GM12878 (cell line): ENCODE measurements at regions of chr14 and their contacts with region 1.

Region 1: DNA sequence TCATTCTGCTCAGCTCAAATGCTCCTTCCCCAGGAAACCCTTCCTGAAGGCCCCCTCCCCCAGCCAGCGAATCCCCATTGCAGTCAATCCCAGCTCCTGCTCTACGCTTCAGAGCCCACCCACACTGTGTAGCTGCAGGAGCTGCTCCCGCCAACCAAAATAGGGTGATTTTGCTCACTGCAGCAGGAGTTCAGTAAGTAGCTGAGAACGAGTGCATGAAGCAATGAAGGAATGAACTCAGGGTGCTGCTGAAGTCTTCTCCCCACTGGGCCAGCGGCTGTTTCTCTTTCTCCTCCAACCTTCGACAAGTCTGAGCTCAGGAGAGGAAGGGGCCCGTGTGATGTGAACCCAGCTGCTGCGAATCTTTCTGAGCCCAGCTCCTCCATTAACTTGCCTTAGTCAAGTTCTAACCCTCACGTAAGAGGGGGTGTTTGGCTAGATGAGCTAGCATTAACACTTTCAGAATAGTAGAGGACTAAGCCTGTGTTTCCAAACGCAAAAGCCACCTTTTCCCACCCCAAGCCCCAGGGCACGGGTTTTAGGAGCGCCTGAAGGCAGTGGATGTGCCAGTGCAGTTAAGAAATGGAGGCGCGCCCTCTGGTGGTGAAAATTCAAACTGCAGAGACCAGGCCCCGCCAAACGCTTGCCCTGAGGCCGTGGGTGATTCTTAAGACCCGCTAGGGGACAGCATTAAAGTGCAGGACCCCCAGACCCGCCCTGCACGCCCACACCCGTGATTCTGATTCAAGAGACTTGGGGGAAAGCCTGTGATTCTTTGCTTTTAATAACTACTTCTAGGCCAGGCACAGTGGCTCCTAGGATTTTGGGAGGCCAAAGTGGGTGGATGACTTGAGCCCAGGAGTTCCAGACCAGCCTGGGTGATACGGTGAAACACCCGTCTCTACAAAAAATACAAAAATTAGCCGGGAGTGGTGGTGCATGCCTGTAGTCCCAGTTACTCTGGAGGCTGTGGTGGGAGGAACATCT is 11.9 kb upstream of the SERPINA4 start:
- DNase-seq: no peak
- ATAC-seq: peak; percentile 93
- H3K4me3 ChIP-seq: no peak overlapping the region
- H3K27ac ChIP-seq: no peak overlapping the region
- H3K4me1 ChIP-seq: no peaks in the 10 kb centered on the region
- H3K27me3 ChIP-seq: peaks cover 0 to 8% of the 10 kb centered on the region in 2 experiments; a peak in 1 of 4 replicates
- CTCF ChIP-seq: peak; percentile 78 to 86 (median 86)
- EP300 ChIP-seq: no peak
- POLR2A ChIP-seq: no peak
- RAD21 ChIP-seq: peak; percentile 61

Region 2: GRCh38 chr14:94193776-94194175 is 355.5 kb before region 1 on chr14:
- CTCF ChIA-PET with region 1: no interaction called
- POLR2A ChIA-PET with region 1: no interaction called
- RAD21 ChIA-PET with region 1: no interaction called
- SMC1A ChIA-PET with region 1: no interaction called
- in situ Hi-C with region 1: no loop called
- intact Hi-C with region 1: no loop called
- DNase-seq: no peak
- ATAC-seq: no peak
- H3K4me3 ChIP-seq: no peak overlapping the region
- H3K27ac ChIP-seq: no peak overlapping the region
- H3K4me1 ChIP-seq: no peaks in the 10 kb centered on the region
- H3K27me3 ChIP-seq: no peaks in the 10 kb centered on the region
- CTCF ChIP-seq: no peak
- EP300 ChIP-seq: no peak
- POLR2A ChIP-seq: no peak
- RAD21 ChIP-seq: no peak

Region 3: GRCh38 chr14:94423453-94424056 is 125.7 kb before region 1 on chr14:
- CTCF ChIA-PET with region 1: interaction called, 18 read pairs
- POLR2A ChIA-PET with region 1: no interaction called
- RAD21 ChIA-PET with region 1: interaction called, 3 read pairs
- SMC1A ChIA-PET with region 1: interaction called, 3 read pairs
- in situ Hi-C with region 1: no loop called
- intact Hi-C with region 1: loop called (anchors 1 kb)
- DNase-seq: peak; percentile 24
- ATAC-seq: peak; percentile 88
- H3K4me3 ChIP-seq: no peak overlapping the region
- H3K27ac ChIP-seq: no peak overlapping the region
- H3K4me1 ChIP-seq: no peaks in the 10 kb centered on the region
- H3K27me3 ChIP-seq: peaks cover 0 to 1% of the 10 kb centered on the region in 2 experiments; a peak in 3 of 4 replicates
- CTCF ChIP-seq: peak; percentile 69 to 85 (median 72)
- EP300 ChIP-seq: no peak
- POLR2A ChIP-seq: no peak
- RAD21 ChIP-seq: peak; percentile 49

Region 4: GRCh38 chr14:94428610-94429009 is 120.7 kb before region 1 on chr14:
- CTCF ChIA-PET with region 1: interaction called, 19 read pairs
- POLR2A ChIA-PET with region 1: no interaction called
- RAD21 ChIA-PET with region 1: interaction called, 11 read pairs
- SMC1A ChIA-PET with region 1: interaction called, 10 read pairs
- in situ Hi-C with region 1: loop called (anchors 5 kb)
- intact Hi-C with region 1: loop called (anchors 1 kb)
- DNase-seq: no peak
- ATAC-seq: no peak
- H3K4me3 ChIP-seq: no peak overlapping the region
- H3K27ac ChIP-seq: no peak overlapping the region
- H3K4me1 ChIP-seq: no peaks in the 10 kb centered on the region
- H3K27me3 ChIP-seq: peaks cover 0 to 1% of the 10 kb centered on the region in 2 experiments; a peak in 3 of 4 replicates
- CTCF ChIP-seq: no peak
- EP300 ChIP-seq: no peak
- POLR2A ChIP-seq: no peak
- RAD21 ChIP-seq: no peak

Region 5: DNA sequence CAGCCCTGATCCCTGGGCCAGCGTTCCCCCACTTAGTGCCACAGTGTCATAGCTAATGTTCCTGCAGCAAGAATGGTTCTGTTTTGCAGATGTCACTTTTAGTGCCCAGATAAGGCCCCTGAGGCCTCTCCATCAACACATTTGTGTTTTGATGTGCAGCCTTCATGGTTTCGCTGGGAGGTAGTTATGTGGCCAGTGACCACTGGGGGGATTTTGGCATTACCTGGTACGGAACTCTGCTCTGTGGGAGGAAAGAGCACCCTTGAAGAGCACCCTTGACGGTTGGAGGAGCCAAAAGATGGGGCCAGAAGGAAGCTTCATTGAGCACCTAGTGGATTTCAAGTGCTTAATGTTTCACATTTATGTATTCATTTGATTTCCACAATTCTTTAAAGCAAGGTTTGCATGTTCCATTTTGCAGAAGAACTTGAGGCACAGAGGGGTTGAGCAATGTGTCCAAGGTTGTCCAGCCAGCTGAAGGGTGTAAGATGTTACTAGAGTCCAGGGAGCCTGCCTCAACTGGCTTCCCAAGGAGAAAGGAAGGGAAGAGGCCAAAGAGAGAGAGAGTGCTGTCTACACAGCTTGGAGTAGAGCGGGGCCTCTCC is 109.7 kb before region 1 on chr14:
- CTCF ChIA-PET with region 1: interaction called, 6 read pairs
- POLR2A ChIA-PET with region 1: no interaction called
- RAD21 ChIA-PET with region 1: no interaction called
- SMC1A ChIA-PET with region 1: interaction called, 4 read pairs
- in situ Hi-C with region 1: loop called (anchors 5 kb)
- intact Hi-C with region 1: loop called (anchors 1 kb)
- DNase-seq: no peak
- ATAC-seq: peak; percentile 44; the same call in 2 of the 3 replicates
- H3K4me3 ChIP-seq: no peak overlapping the region
- H3K27ac ChIP-seq: no peak overlapping the region
- H3K4me1 ChIP-seq: no peaks in the 10 kb centered on the region
- H3K27me3 ChIP-seq: no peaks in the 10 kb centered on the region
- CTCF ChIP-seq: peak in 2 of 3 experiments; percentile 12 to 16; a peak in 1 of 6 replicates
- EP300 ChIP-seq: no peak
- POLR2A ChIP-seq: no peak
- RAD21 ChIP-seq: no peak

Region 6: DNA sequence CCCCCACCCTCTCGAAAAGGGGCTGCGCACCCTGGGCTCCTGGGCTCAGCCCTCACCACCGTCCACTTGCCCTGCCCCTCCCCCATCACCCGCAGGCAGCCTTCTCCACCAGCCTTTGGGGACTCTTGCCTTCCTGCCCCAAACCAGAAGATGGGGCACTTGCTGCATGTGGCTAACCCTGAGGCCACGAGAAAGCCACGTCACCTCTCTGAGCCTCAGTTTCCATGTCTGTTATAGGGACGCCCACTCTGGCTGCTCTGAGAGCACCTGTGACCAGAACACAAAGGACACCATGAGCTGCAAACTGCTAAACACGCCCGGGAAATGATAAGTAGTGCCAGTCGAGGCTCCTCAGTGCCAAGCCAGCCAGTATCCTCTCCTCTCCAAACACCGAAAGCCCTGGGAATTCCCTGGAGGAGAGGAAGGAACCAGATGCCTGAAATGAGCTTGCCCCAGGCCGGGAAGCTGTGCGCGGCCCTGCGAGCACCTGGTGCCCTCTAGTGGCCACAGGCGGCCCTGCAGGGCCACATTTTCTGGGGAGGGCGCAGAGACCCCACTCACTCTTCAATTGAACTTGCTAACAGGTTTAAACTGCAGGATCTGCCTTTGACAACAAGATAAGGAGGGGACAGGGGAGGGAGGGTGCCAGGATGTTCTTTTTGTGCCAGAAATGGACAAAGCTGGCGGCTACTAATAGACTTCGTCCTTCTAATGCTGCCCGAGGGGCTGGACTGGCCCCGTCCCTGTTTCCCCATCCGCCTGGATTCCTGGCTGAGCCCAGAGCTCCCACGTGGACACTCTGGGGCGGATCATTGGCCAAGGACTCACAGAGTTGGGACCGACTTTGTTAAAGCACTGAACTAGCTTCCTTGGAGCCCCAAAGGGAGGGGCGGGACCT is 63.1 kb before region 1 on chr14:
- CTCF ChIA-PET with region 1: interaction called, 5 read pairs
- POLR2A ChIA-PET with region 1: no interaction called
- RAD21 ChIA-PET with region 1: interaction called, 12 read pairs
- SMC1A ChIA-PET with region 1: no interaction called
- in situ Hi-C with region 1: no loop called
- intact Hi-C with region 1: loop called (anchors 1 kb)
- DNase-seq: no peak
- ATAC-seq: peak; percentile 64
- H3K4me3 ChIP-seq: no peak overlapping the region
- H3K27ac ChIP-seq: no peak overlapping the region
- H3K4me1 ChIP-seq: peaks cover 10% of the 10 kb centered on the region
- H3K27me3 ChIP-seq: peaks cover 0 to 2% of the 10 kb centered on the region in 2 experiments; a peak in 1 of 4 replicates
- CTCF ChIP-seq: peak; percentile 98 to 99 (median 99); a peak in 5 of 6 replicates
- EP300 ChIP-seq: no peak
- POLR2A ChIP-seq: no peak
- RAD21 ChIP-seq: peak; percentile 80

Region 7: DNA sequence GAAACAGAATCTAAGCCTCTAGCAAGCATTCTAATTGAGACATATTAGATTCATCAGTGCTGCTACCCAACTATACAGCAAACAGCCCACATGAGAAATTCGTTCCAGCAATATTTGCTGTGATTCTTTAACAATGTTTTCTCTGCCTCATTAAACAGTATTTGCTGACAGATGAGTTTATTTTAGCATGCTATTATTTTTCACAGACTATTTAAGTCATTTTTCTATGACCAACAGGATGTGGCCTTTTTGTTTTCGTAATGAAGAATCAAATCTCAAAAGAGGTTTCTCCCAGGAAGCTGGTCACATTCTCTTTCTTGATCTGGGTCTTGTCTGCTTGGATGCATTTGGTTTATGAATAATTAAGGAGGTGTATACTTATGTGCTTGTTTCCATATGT is 16.8 kb before region 1 on chr14:
- CTCF ChIA-PET with region 1: interaction called, 10 read pairs
- POLR2A ChIA-PET with region 1: no interaction called
- RAD21 ChIA-PET with region 1: no interaction called
- SMC1A ChIA-PET with region 1: no interaction called
- in situ Hi-C with region 1: no loop called
- intact Hi-C with region 1: no loop called
- DNase-seq: peak; percentile 37
- ATAC-seq: no peak; the same call in 2 of the 3 replicates
- H3K4me3 ChIP-seq: no peak overlapping the region
- H3K27ac ChIP-seq: no peak overlapping the region
- H3K4me1 ChIP-seq: peaks cover 4% of the 10 kb centered on the region; the same call in 1 of the 2 replicates
- H3K27me3 ChIP-seq: no peaks in the 10 kb centered on the region
- CTCF ChIP-seq: no peak
- EP300 ChIP-seq: no peak
- POLR2A ChIP-seq: no peak
- RAD21 ChIP-seq: no peak

Region 8: DNA sequence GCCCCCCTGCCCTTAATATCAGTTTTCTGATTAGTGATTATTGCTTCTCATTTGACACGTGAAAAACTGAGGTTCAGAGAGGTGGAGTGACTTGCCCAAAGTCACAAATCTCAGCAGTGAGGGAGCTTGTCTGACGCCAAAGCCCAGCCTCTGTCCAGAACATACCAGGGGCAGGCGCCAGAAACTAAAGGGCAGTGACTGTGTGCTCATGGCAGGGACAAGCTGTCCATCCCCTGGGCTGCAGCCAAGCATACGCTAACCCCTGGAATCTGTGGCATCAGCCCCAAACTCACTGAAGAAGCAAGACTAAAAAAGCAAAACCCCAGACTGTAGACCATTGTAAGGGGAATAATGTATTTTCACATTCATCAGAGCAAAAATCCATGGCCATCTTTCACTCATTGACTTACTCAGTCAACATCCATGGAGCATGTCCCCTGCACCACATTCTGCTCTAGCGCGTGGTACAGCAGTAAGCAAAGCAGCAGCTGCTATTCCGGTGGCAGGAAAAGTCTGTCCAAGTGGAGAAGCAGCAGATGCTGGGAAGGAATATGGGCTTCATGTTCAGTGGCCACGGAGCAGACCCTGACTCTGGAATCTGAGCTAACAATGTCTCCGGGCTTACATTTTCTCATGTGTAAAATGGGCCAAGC is 10.5 kb after region 1 on chr14:
- CTCF ChIA-PET with region 1: interaction called, 11 read pairs
- POLR2A ChIA-PET with region 1: no interaction called
- RAD21 ChIA-PET with region 1: no interaction called
- SMC1A ChIA-PET with region 1: no interaction called
- in situ Hi-C with region 1: no loop called
- intact Hi-C with region 1: no loop called
- DNase-seq: no peak
- ATAC-seq: no peak
- H3K4me3 ChIP-seq: no peak overlapping the region
- H3K27ac ChIP-seq: no peak overlapping the region
- H3K4me1 ChIP-seq: no peaks in the 10 kb centered on the region
- H3K27me3 ChIP-seq: no peaks in the 10 kb centered on the region
- CTCF ChIP-seq: no peak
- EP300 ChIP-seq: no peak
- POLR2A ChIP-seq: no peak
- RAD21 ChIP-seq: no peak